WTC11 (cell line): ENCODE measurements at regions of chr2 and their contacts with region 1.

Region 1: GRCh38 chr2:53767405-53768241 is at the start of gene CHAC2:
- DNase-seq: peak; percentile 81
- ATAC-seq: peak; percentile 92
- H3K4me3 Mint-ChIP-seq: peak within 1 kb of the TSS; percentile 90
- H3K27ac Mint-ChIP-seq: peak within 1 kb of the TSS; percentile 87
- H3K4me1 Mint-ChIP-seq: peaks cover 23% of the 10 kb centered on the region
- H3K27me3 Mint-ChIP-seq: no peaks in the 10 kb centered on the region
- CTCF ChIP-seq: no peak
- total RNA-seq, gene CHAC2: 8.7 to 10.2 TPM (median 9.6 TPM) in 3 replicates

Region 2: GRCh38 chr2:53568469-53568868 is 199.2 kb before region 1 on chr2:
- CTCF ChIA-PET with region 1: no interaction called
- POLR2A ChIA-PET with region 1: no interaction called
- DNase-seq: no peak
- ATAC-seq: no peak
- H3K4me3 Mint-ChIP-seq: no peak overlapping the region
- H3K27ac Mint-ChIP-seq: peak overlapping the region; percentile 64; the same call in 1 of the 2 replicates
- H3K4me1 Mint-ChIP-seq: peaks cover 15% of the 10 kb centered on the region
- H3K27me3 Mint-ChIP-seq: no peaks in the 10 kb centered on the region
- CTCF ChIP-seq: no peak

Region 3: DNA sequence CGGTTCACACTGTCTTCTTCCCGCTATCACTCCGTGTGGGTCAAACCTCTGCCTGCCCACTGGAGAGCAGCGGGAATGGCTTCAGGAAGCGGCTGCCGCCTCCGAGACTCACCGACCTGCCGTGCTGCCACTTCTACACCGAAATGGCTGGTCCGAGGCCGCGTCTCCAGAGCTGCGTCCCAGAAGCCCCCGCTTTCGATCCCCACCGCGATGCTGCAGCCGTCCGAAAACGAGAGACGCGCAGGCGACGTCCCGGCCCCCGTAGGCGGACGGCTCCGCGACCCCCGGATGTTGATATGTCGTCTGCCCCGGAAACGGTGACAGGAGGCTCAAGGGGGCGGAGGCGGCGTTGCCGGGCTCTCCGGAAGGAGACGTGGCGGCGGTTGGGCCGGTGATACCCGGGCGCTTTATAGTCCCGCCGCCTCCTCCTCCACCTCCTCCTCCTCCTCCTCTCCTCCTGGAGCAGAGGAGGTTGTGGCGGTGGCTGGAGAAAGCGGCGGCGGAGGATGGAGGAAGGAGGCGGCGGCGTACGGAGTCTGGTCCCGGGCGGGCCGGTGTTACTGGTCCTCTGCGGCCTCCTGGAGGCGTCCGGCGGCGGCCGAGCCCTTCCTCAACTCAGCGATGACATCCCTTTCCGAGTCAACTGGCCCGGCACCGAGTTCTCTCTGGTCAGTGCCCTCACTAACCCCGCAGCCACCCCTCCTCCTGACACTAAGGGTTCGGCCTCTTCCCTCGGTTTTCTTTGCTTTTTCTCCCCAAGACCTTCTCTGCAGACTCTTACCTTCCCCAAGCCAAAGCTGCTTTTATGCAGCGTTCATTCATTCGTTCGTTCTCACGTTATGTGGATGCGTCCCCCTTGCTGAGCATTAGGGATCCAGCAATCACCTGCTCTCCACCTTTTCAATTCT is 19.3 kb after region 1 on chr2 and contains the starts of genes ASB3 and ERLEC1:
- CTCF ChIA-PET with region 1: interaction called, 3 read pairs
- POLR2A ChIA-PET with region 1: interaction called, 11 read pairs
- DNase-seq: peak; percentile 92
- ATAC-seq: peak; percentile 93
- H3K4me3 Mint-ChIP-seq: peak within 1 kb of the TSS; percentile 98
- H3K27ac Mint-ChIP-seq: peak within 1 kb of the TSS; percentile 99
- H3K4me1 Mint-ChIP-seq: peaks cover 44% of the 10 kb centered on the region
- H3K27me3 Mint-ChIP-seq: no peaks in the 10 kb centered on the region
- CTCF ChIP-seq: no peak
- total RNA-seq, gene ASB3: 26.9 to 30.2 TPM (median 30.0 TPM) in 3 replicates
- total RNA-seq, gene ERLEC1: 25.9 to 27.8 TPM (median 26.5 TPM) in 3 replicates